ENCODE measurements at regions of chr14 and their contacts with region 1.

Region 1: DNA sequence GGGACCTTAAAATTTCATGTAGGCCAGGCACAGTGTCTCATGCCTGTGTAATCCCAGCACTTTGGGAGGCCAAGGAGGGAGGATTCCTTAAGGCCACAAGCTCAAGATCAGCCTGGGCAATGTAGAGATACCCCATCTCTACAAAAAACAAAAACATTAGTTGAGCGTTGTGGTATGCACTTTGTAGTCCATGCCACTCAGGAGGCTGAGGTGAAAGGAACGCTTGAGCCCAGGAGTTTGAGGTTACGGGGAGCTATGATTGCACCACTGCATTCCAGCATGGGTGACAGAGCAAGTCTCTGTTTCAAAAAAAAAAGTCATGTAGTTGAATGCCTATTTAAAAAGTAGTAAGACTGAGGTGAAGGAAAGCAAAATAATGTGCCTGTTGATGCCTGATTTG is 83.5 kb downstream of the TTC6 start:
- DNase-seq: peak; percentile 77
- ATAC-seq: peak; percentile 93
- H3K4me3 ChIP-seq: no peak overlapping the region
- H3K27ac ChIP-seq: no peak overlapping the region
- H3K4me1 ChIP-seq: peaks cover 8% of the 10 kb centered on the region
- H3K27me3 ChIP-seq: no peaks in the 10 kb centered on the region
- CTCF ChIP-seq: no peak
- EP300 ChIP-seq: 0 out of 4 replicates have a peak, but pooled peaks of 1 of the 2 experiments have one; percentile 9
- POLR2A ChIP-seq: no peak
- RAD21 ChIP-seq: no peak

Region 2: DNA sequence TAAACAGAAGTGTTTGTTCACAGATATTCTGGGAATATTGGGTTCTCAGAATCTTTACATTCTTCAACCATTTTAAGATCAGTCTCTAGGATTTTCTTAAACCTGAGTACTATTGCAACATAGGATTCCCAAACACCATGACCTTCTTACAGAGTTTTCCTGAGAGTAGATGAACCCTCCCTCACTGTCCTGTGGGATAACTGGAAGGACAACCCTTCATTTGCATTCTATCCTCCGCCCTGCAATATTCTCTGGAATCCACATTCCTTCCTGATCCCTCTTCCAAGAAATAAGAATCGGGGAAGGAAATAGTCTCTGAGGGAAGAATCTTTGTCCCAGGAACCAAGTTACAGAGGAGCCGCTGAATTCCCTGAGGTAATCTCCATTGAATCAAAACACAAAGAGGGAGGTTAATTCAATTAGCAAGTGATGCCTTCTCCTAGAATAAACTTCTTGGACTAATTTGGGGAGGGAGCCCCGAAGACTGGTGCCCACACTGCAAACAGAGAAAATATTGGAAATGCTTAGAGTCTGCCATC is 1258.7 kb before region 1 on chr14:
- CTCF ChIA-PET with region 1: no interaction called
- POLR2A ChIA-PET with region 1: no interaction called
- in situ Hi-C with region 1: no loop called
- intact Hi-C with region 1: no loop called
- DNase-seq: no peak
- ATAC-seq: no peak
- H3K4me3 ChIP-seq: no peak overlapping the region
- H3K27ac ChIP-seq: no peak overlapping the region
- H3K4me1 ChIP-seq: no peaks in the 10 kb centered on the region
- H3K27me3 ChIP-seq: no peaks in the 10 kb centered on the region
- CTCF ChIP-seq: no peak
- EP300 ChIP-seq: no peak
- POLR2A ChIP-seq: no peak
- RAD21 ChIP-seq: no peak

Region 3: DNA sequence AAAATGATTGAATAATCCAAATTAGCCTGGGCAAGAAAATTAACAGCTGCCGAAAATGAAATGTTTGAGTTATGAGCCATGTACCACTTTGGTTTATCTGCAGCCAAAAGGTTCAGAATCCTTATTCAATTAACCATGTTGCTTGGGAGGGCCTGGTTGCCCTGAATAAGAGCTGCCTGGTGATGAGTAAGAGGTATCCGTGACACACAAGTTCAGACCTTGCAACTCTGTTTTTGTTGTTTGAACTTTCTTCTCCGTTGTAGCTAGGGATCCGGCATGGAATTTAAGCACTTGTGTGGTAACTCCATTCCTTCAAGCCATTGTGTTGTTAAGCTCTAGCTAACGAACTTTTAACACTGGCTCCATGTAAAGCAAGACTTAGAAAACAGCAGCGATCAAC is 119.5 kb before region 1 on chr14:
- CTCF ChIA-PET with region 1: no interaction called
- POLR2A ChIA-PET with region 1: no interaction called
- in situ Hi-C with region 1: no loop called
- intact Hi-C with region 1: no loop called
- DNase-seq: no peak
- ATAC-seq: peak; percentile 41; the same call in 2 of the 3 replicates
- H3K4me3 ChIP-seq: no peak overlapping the region
- H3K27ac ChIP-seq: no peak overlapping the region
- H3K4me1 ChIP-seq: peaks cover 30% of the 10 kb centered on the region
- H3K27me3 ChIP-seq: no peaks in the 10 kb centered on the region
- CTCF ChIP-seq: no peak
- EP300 ChIP-seq: no peak
- POLR2A ChIP-seq: no peak
- RAD21 ChIP-seq: no peak

Region 4: GRCh38 chr14:38342803-38343202 is 663.9 kb after region 1 on chr14:
- CTCF ChIA-PET with region 1: no interaction called
- POLR2A ChIA-PET with region 1: no interaction called
- in situ Hi-C with region 1: no loop called
- intact Hi-C with region 1: loop called (anchors 10 kb)
- DNase-seq: no peak
- ATAC-seq: peak; percentile 61
- H3K4me3 ChIP-seq: no peak overlapping the region
- H3K27ac ChIP-seq: no peak overlapping the region
- H3K4me1 ChIP-seq: no peaks in the 10 kb centered on the region
- H3K27me3 ChIP-seq: no peaks in the 10 kb centered on the region
- CTCF ChIP-seq: no peak
- EP300 ChIP-seq: no peak
- POLR2A ChIP-seq: no peak
- RAD21 ChIP-seq: no peak

Measured in HepG2 (cell line).